Activated B cell treated with CpG ODN at 0.5 μM for 24 hours (primary cell): ENCODE measurements at regions of chr12 and their contacts with region 1.

Region 1: GRCh38 chr12:8032242-8033152 is at the start of gene FOXJ2:
- DNase-seq: peak; percentile 73
- ATAC-seq: peak; percentile 86
- H3K4me3 Mint-ChIP-seq: peak within 1 kb of the TSS; percentile 86
- H3K27ac Mint-ChIP-seq: peak within 1 kb of the TSS; percentile 74
- H3K4me1 Mint-ChIP-seq: peaks cover 53% of the 10 kb centered on the region
- H3K27me3 Mint-ChIP-seq: no peaks in the 10 kb centered on the region
- CTCF ChIP-seq: no peak
- total RNA-seq, gene FOXJ2: 12.5 and 13.6 TPM in 2 replicates

Region 2: GRCh38 chr12:8078398-8078797 is 45.9 kb after region 1 on chr12:
- CTCF ChIA-PET with region 1: interaction called, 4 read pairs
- POLR2A ChIA-PET with region 1: interaction called, 9 read pairs
- intact Hi-C with region 1: loop called (anchors 1 kb)
- DNase-seq: no peak
- ATAC-seq: no peak
- H3K4me3 Mint-ChIP-seq: no peak overlapping the region
- H3K27ac Mint-ChIP-seq: no peak overlapping the region
- H3K4me1 Mint-ChIP-seq: peaks cover 38% of the 10 kb centered on the region
- H3K27me3 Mint-ChIP-seq: peaks cover under 1% of the 10 kb centered on the region
- CTCF ChIP-seq: no peak